Caco-2 (cell line): ENCODE measurements at regions of chrX and their contacts with region 1.

Region 1: DNA sequence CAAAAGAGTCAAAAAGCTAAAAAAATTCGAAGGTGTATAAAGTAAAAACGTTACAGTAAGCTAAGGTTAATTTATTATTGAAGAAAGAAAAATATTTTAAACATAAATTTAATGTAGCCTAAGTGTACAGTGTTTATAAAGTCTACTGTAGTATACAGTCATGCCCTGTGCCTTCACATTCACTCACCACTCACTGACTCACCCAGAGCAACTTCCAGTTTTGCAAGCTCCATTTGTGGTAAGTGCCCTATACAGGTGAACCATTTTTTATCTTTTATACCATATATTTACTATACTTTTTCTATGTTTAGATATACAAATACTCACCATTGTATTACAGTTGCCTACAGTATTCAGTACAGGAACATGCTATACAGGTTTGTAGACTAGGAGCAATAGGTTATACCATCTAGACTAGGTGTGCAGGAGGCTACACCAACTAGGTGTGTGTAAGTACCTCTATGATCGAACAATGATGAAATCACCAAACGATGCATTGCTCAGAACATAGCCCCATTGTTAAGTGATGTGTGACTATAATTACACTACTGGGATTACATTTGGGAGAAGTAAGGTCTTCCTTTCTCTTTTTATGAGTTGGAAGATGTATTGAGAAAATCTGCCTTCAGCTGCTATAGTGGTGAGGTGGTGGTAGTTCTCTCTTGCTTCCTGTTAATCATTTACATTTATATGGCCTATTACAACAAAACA is 27.2 kb downstream of the TMSB4X start:
- DNase-seq: peak in 1 of 2 experiments; percentile 10
- H3K4me3 ChIP-seq: no peak overlapping the region
- H3K4me3 Mint-ChIP-seq: no peak overlapping the region
- H3K27ac Mint-ChIP-seq: no peak overlapping the region
- H3K4me1 ChIP-seq: peaks cover 20% of the 10 kb centered on the region
- H3K4me1 Mint-ChIP-seq: peaks cover 10% of the 10 kb centered on the region
- H3K27me3 ChIP-seq: no peaks in the 10 kb centered on the region
- H3K27me3 Mint-ChIP-seq: no peaks in the 10 kb centered on the region
- CTCF ChIP-seq: no peak

Region 2: GRCh38 chrX:12936947-12937346 is 65.2 kb before region 1 on chrX:
- CTCF ChIA-PET with region 1: no interaction called
- POLR2A ChIA-PET with region 1: no interaction called
- intact Hi-C with region 1: no loop called
- DNase-seq: no peak
- H3K4me3 ChIP-seq: no peak overlapping the region
- H3K4me3 Mint-ChIP-seq: no peak overlapping the region
- H3K27ac Mint-ChIP-seq: no peak overlapping the region
- H3K4me1 ChIP-seq: no peaks in the 10 kb centered on the region
- H3K4me1 Mint-ChIP-seq: no peaks in the 10 kb centered on the region
- H3K27me3 ChIP-seq: no peaks in the 10 kb centered on the region
- H3K27me3 Mint-ChIP-seq: no peaks in the 10 kb centered on the region
- CTCF ChIP-seq: no peak

Region 3: DNA sequence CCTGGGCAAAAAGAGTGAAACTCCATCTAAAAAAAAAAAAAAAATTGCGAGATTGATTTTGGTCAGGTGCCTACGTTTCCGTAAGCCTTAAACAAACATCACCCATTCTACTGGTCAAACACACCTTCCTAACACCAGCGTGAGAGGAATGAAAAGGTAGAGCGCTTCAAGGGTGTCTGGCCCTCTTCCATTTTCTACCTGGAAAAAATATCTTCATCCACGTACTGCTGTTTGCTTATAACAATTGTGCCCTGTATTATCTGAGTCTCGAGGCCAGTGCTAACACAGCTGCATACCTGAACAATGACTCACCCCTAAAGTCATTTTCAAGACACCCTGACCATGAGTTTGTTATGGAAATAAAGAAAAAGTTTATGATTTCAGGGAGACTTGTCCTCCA is 13.3 kb before region 1 on chrX:
- CTCF ChIA-PET with region 1: no interaction called
- POLR2A ChIA-PET with region 1: no interaction called
- intact Hi-C with region 1: loop called (anchors 2 kb)
- DNase-seq: peak; percentile 70 to 71
- H3K4me3 ChIP-seq: no peak overlapping the region
- H3K4me3 Mint-ChIP-seq: peak overlapping the region; percentile 57
- H3K27ac Mint-ChIP-seq: peak overlapping the region; percentile 47
- H3K4me1 ChIP-seq: peaks cover 27% of the 10 kb centered on the region
- H3K4me1 Mint-ChIP-seq: peaks cover 13% of the 10 kb centered on the region
- H3K27me3 ChIP-seq: no peaks in the 10 kb centered on the region
- H3K27me3 Mint-ChIP-seq: no peaks in the 10 kb centered on the region
- CTCF ChIP-seq: no peak

Region 4: DNA sequence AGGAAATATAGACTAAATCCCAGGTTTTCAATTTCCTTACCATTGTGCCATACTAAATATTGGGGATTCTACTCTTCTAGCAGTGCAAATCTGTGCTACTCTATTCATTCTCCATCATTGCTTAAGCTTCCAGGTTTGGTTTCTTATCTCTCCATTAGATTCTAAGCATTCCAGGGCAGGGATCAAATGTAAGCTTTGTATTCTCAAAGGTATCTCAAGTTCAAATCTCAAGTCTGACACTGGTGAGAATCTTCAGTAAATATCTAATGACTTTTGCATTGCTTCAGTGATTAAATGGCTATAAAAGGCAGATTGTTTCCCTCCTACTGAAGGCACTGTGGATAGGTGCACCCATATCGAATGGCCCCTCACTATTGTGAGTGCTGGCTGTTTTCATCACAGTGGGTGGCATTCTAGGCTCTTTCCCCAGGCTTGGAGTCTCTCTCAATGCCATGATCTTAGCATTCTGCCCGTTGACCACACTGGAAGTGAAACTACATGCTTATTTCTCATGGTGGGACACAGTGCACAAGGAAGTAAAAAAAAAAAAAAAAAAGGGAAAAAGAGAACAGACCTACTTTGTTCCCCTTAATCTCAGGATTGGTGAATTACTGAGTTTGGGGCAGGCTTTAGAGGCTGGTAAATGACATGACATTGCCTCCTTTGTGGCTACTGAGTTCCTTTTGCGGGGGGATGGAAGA is 13.6 kb after region 1 on chrX:
- CTCF ChIA-PET with region 1: no interaction called
- POLR2A ChIA-PET with region 1: interaction called, 11 read pairs
- intact Hi-C with region 1: no loop called
- DNase-seq: no peak
- H3K4me3 ChIP-seq: no peak overlapping the region
- H3K4me3 Mint-ChIP-seq: no peak overlapping the region
- H3K27ac Mint-ChIP-seq: no peak overlapping the region
- H3K4me1 ChIP-seq: peaks cover 25% of the 10 kb centered on the region
- H3K4me1 Mint-ChIP-seq: peaks cover 13% of the 10 kb centered on the region
- H3K27me3 ChIP-seq: no peaks in the 10 kb centered on the region
- H3K27me3 Mint-ChIP-seq: no peaks in the 10 kb centered on the region
- CTCF ChIP-seq: no peak